Caco-2 (cell line): ENCODE measurements at regions of chr3 and their contacts with region 1.

Region 1: GRCh38 chr3:161423911-161424522 is 52.7 kb upstream of the SPTSSB start:
- DNase-seq: peak in 1 of 2 experiments; percentile 32
- H3K4me3 ChIP-seq: no peak overlapping the region
- H3K4me3 Mint-ChIP-seq: no peak overlapping the region
- H3K27ac Mint-ChIP-seq: no peak overlapping the region
- H3K4me1 ChIP-seq: peaks cover 31% of the 10 kb centered on the region
- H3K4me1 Mint-ChIP-seq: peaks cover 9% of the 10 kb centered on the region
- H3K27me3 ChIP-seq: no peaks in the 10 kb centered on the region
- H3K27me3 Mint-ChIP-seq: no peaks in the 10 kb centered on the region
- CTCF ChIP-seq: peak; percentile 36 to 52

Region 2: GRCh38 chr3:160707187-160707794 is 716.7 kb before region 1 on chr3:
- CTCF ChIA-PET with region 1: no interaction called
- POLR2A ChIA-PET with region 1: no interaction called
- intact Hi-C with region 1: loop called (anchors 1 kb)
- DNase-seq: peak in 1 of 2 experiments; percentile 40
- H3K4me3 ChIP-seq: no peak overlapping the region
- H3K4me3 Mint-ChIP-seq: no peak overlapping the region
- H3K27ac Mint-ChIP-seq: no peak overlapping the region
- H3K4me1 ChIP-seq: no peaks in the 10 kb centered on the region
- H3K4me1 Mint-ChIP-seq: no peaks in the 10 kb centered on the region
- H3K27me3 ChIP-seq: no peaks in the 10 kb centered on the region
- H3K27me3 Mint-ChIP-seq: peaks cover 15% of the 10 kb centered on the region
- CTCF ChIP-seq: peak; percentile 47

Region 3: GRCh38 chr3:160921020-160921635 is 502.9 kb before region 1 on chr3:
- CTCF ChIA-PET with region 1: no interaction called
- POLR2A ChIA-PET with region 1: no interaction called
- intact Hi-C with region 1: loop called (anchors 1 kb)
- DNase-seq: peak in 1 of 2 experiments; percentile 41
- H3K4me3 ChIP-seq: no peak overlapping the region
- H3K4me3 Mint-ChIP-seq: no peak overlapping the region
- H3K27ac Mint-ChIP-seq: no peak overlapping the region
- H3K4me1 ChIP-seq: no peaks in the 10 kb centered on the region
- H3K4me1 Mint-ChIP-seq: no peaks in the 10 kb centered on the region
- H3K27me3 ChIP-seq: no peaks in the 10 kb centered on the region
- H3K27me3 Mint-ChIP-seq: peaks cover 14% of the 10 kb centered on the region
- CTCF ChIP-seq: peak; percentile 80 to 89

Region 4: GRCh38 chr3:161008063-161008462 is 416.0 kb before region 1 on chr3:
- CTCF ChIA-PET with region 1: no interaction called
- POLR2A ChIA-PET with region 1: no interaction called
- intact Hi-C with region 1: no loop called
- DNase-seq: no peak
- H3K4me3 ChIP-seq: no peak overlapping the region
- H3K4me3 Mint-ChIP-seq: no peak overlapping the region
- H3K27ac Mint-ChIP-seq: no peak overlapping the region
- H3K4me1 ChIP-seq: no peaks in the 10 kb centered on the region
- H3K4me1 Mint-ChIP-seq: no peaks in the 10 kb centered on the region
- H3K27me3 ChIP-seq: no peaks in the 10 kb centered on the region
- H3K27me3 Mint-ChIP-seq: peaks cover 2% of the 10 kb centered on the region
- CTCF ChIP-seq: no peak

Region 5: GRCh38 chr3:161096771-161097355 is 327.2 kb before region 1 on chr3:
- CTCF ChIA-PET with region 1: interaction called, 3 read pairs
- POLR2A ChIA-PET with region 1: no interaction called
- intact Hi-C with region 1: loop called (anchors 1 kb)
- DNase-seq: peak; percentile 45 to 51
- H3K4me3 ChIP-seq: no peak overlapping the region
- H3K4me3 Mint-ChIP-seq: no peak overlapping the region
- H3K27ac Mint-ChIP-seq: no peak overlapping the region
- H3K4me1 ChIP-seq: peaks cover 17% of the 10 kb centered on the region
- H3K4me1 Mint-ChIP-seq: peaks cover 7% of the 10 kb centered on the region
- H3K27me3 ChIP-seq: no peaks in the 10 kb centered on the region
- H3K27me3 Mint-ChIP-seq: no peaks in the 10 kb centered on the region
- CTCF ChIP-seq: peak; percentile 52 to 60

Region 6: DNA sequence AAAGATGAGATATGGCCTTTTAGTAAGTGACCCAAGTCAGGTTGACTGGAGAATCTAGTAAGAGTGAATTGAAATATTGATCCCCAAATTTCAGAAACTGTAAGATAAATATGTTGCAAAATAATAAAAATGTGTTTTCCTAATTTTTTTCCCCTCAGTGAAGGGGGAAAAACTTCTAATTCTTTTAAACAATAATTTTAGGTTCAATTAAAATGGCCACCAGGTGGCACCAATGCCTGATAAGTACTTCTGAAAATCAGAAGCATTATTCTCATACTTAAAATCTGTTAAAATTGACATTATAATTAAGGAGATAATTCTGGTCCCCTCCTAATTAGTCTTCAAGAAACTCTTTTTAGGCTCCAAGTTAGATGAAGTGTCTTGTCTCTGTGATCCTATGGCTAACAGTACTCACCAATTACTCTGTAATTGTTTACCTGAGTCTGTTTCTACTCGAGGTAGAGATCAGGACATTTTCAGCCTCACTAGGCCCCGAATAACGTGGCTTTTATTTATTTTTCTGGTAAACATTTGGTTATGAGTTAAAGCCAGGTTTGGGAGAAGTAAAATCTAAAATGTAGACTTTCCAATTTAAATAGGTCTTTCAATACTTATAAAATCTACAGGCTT is 150.3 kb before region 1 on chr3:
- CTCF ChIA-PET with region 1: interaction called, 3 read pairs
- POLR2A ChIA-PET with region 1: no interaction called
- intact Hi-C with region 1: loop called (anchors 1 kb)
- DNase-seq: peak in 1 of 2 experiments; percentile 26
- H3K4me3 ChIP-seq: no peak overlapping the region
- H3K4me3 Mint-ChIP-seq: no peak overlapping the region
- H3K27ac Mint-ChIP-seq: no peak overlapping the region
- H3K4me1 ChIP-seq: peaks cover 10% of the 10 kb centered on the region
- H3K4me1 Mint-ChIP-seq: peaks cover 4% of the 10 kb centered on the region
- H3K27me3 ChIP-seq: no peaks in the 10 kb centered on the region
- H3K27me3 Mint-ChIP-seq: no peaks in the 10 kb centered on the region
- CTCF ChIP-seq: peak; percentile 17 to 62

Region 7: DNA sequence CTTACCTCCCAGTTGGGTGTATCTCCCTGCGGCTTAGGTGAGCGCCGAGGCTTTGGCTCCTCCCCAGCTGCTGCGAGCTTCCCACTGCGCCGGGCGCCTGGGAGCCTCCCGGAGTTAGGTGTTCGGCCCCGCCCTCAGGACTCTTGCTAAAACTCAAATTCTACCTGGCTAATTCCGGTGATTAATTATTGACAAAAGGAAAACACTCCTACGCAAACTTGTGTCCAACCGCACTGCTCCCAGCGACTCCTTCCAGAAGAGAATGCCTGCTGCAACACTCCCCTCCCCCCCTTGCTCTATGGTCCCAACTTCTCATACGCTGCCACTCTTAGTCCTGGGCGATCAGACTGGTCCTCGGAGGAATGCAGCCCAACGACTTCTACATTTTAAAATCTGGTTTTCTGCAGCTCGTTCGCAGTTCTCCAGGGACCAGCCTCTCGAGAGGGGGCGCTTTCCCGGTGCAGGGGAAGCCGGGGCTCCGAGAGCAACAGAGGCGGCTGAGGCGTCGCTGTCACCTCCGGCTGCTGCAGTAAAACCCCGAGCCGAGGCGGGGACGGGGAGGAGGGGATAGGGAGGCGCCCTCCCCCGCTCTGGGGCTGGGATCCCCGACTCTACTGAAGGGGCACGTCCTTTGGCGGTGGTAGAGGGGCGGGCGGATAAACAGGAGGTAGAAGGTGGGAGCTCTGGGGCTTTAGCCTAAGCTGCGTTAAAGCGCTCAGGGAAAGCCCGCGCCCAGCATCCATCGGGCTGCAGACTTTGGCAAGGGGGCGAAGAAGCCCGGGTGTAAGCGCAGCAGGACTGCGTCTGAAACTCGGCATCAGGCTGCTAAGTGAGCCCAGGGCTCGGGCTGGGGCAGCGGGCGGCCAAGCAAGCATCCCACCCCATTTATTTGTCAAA is 52.3 kb before region 1 on chr3 and contains the start of gene SPTSSB:
- CTCF ChIA-PET with region 1: interaction called, 6 read pairs
- POLR2A ChIA-PET with region 1: no interaction called
- intact Hi-C with region 1: loop called (anchors 1 kb)
- DNase-seq: peak; percentile 91 to 93
- H3K4me3 ChIP-seq: peak within 1 kb of the TSS; percentile 67
- H3K4me3 Mint-ChIP-seq: peak within 1 kb of the TSS; percentile 92
- H3K27ac Mint-ChIP-seq: peak within 1 kb of the TSS; percentile 92
- H3K4me1 ChIP-seq: no peaks in the 10 kb centered on the region
- H3K4me1 Mint-ChIP-seq: peaks cover 17% of the 10 kb centered on the region
- H3K27me3 ChIP-seq: no peaks in the 10 kb centered on the region
- H3K27me3 Mint-ChIP-seq: no peaks in the 10 kb centered on the region
- CTCF ChIP-seq: peak in 1 of 2 experiments; percentile 53
- total RNA-seq, gene SPTSSB: 45.9 and 51.6 TPM in 2 replicates

Region 8: GRCh38 chr3:161682715-161683114 is 258.7 kb after region 1 on chr3:
- CTCF ChIA-PET with region 1: no interaction called
- POLR2A ChIA-PET with region 1: no interaction called
- intact Hi-C with region 1: no loop called
- DNase-seq: no peak
- H3K4me3 ChIP-seq: no peak overlapping the region
- H3K4me3 Mint-ChIP-seq: no peak overlapping the region
- H3K27ac Mint-ChIP-seq: no peak overlapping the region
- H3K4me1 ChIP-seq: no peaks in the 10 kb centered on the region
- H3K4me1 Mint-ChIP-seq: no peaks in the 10 kb centered on the region
- H3K27me3 ChIP-seq: no peaks in the 10 kb centered on the region
- H3K27me3 Mint-ChIP-seq: no peaks in the 10 kb centered on the region
- CTCF ChIP-seq: no peak